ENCODE measurements at regions of chr7 and their contacts with region 1.

Region 1: GRCh38 chr7:108235451-108236061 is 105.4 kb upstream of the LAMB4 start:
- DNase-seq: no peak
- H3K4me3 Mint-ChIP-seq: peak overlapping the region; percentile 32
- H3K27ac Mint-ChIP-seq: peak overlapping the region; percentile 33
- H3K4me1 Mint-ChIP-seq: peaks cover 28% of the 10 kb centered on the region
- H3K27me3 Mint-ChIP-seq: no peaks in the 10 kb centered on the region
- CTCF ChIP-seq: no peak

Region 2: DNA sequence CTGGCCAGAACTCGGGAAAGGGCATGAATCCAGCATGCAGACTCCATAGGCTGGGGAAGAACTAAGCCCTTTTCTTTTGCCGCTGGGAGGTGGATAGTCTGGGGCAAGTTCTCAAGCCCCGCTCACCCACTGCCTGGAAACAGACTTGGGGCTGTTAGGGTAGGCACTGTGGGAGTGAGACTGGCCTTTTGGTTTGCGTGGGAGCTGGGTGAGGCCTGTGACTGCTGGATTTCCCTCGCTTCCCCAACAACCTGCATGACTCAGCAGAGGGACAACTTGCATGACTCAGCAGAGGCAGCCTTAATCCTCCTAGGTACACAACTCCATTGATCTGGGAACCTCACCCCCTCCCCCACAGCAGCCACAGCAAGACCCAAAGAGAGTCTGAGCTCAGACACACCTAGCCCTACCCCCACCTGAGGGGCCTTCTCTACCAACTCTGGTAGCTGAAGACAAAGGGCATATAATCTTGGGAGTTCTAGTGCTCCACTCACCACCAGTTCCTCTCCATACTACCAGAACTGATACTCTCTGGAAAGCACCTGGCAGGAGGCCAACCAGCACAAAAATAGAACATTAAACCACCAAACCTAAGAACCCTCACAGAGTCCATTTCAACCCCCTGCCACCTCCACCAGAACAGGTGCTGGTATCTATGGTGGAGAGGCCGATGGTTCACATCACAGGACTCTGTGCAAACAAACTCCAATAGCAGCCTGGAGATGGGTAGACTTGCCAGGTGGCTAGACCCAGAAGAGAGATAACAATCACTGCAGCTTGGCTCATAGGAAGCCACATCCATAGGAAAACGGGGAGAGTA is 24.0 kb before region 1 on chr7:
- CTCF ChIA-PET with region 1: no interaction called
- intact Hi-C with region 1: no loop called
- DNase-seq: peak; percentile 66
- H3K4me3 Mint-ChIP-seq: no peak overlapping the region
- H3K27ac Mint-ChIP-seq: peak overlapping the region; percentile 55
- H3K4me1 Mint-ChIP-seq: peaks cover 35% of the 10 kb centered on the region
- H3K27me3 Mint-ChIP-seq: no peaks in the 10 kb centered on the region
- CTCF ChIP-seq: no peak

Region 3: GRCh38 chr7:108270385-108271015 is 34.9 kb after region 1 on chr7:
- CTCF ChIA-PET with region 1: no interaction called
- intact Hi-C with region 1: loop called (anchors 2 kb)
- DNase-seq: no peak
- H3K4me3 Mint-ChIP-seq: no peak overlapping the region
- H3K27ac Mint-ChIP-seq: no peak overlapping the region
- H3K4me1 Mint-ChIP-seq: peaks cover 23% of the 10 kb centered on the region
- H3K27me3 Mint-ChIP-seq: no peaks in the 10 kb centered on the region
- CTCF ChIP-seq: no peak